SK-N-SH (cell line): ENCODE measurements at regions of chr19 and their contacts with region 1.

Region 1: GRCh38 chr19:15418588-15419412 is at the start of gene AKAP8L:
- DNase-seq: peak; percentile 97
- H3K4me3 ChIP-seq: peak within 1 kb of the TSS; percentile 93 to 94
- H3K27ac ChIP-seq: peak within 1 kb of the TSS; percentile 73 to 89
- H3K4me1 ChIP-seq: peaks cover 10 to 42% of the 10 kb centered on the region in 2 experiments; a peak in 3 of 4 replicates
- H3K27me3 ChIP-seq: no peaks in the 10 kb centered on the region
- CTCF ChIP-seq: peak; percentile 66
- EP300 ChIP-seq: no peak
- RAD21 ChIP-seq: peak; percentile 73
- polyA plus RNA-seq, gene AKAP8L: 44.7 and 46.1 TPM in 2 replicates

Region 2: DNA sequence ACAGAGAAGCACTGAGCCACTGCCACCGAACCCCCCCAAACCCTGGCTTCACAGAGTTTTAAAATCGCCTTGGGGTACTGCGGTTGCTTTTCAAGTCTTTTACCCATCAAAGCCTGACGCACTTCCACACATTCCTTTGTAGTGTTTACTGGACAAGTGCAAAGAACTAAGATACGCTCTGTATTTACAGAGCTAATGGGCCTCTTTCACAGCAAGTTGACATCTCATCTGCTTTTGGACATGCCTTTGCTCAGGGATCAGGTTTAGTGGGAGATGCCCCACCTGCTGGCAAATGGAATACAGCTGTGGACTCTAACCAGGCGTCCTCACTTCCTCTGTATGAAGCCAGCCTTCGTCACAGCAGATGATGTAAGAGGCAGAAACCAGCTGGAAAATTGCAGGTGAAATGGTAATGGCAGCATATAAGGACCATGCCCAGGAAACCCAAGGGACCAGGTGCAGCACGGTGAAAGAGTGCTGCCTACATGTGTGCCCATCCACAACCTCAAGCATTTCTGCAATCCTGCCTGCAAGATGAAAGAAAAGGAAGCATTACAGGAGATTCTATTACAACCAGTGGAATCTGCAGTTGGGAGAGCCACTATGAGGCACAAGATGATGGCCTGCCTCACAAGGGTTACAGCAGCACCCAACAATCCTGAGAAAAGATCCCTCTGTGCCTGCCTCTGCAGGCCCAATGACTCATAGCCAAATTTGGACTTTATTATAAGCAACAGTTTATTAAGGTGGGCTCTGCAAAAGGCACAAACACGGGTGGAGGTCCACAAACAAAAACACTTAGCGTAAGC is 121.2 kb before region 1 on chr19:
- CTCF ChIA-PET with region 1: no interaction called
- POLR2A ChIA-PET with region 1: no interaction called
- DNase-seq: no peak
- H3K4me3 ChIP-seq: no peak overlapping the region
- H3K27ac ChIP-seq: peak overlapping the region; percentile 65 to 84; a peak in 3 of 4 replicates
- H3K4me1 ChIP-seq: peaks cover 48 to 71% of the 10 kb centered on the region in 2 experiments
- H3K27me3 ChIP-seq: no peaks in the 10 kb centered on the region
- CTCF ChIP-seq: peak; percentile 17; the same call in 1 of the 2 replicates
- EP300 ChIP-seq: no peak
- RAD21 ChIP-seq: peak; percentile 41

Region 3: GRCh38 chr19:15379083-15379995 is 39.5 kb before region 1 on chr19 and contains the start of gene AKAP8:
- CTCF ChIA-PET with region 1: interaction called, 9 read pairs
- POLR2A ChIA-PET with region 1: interaction called, 15 read pairs
- DNase-seq: peak; percentile 100
- H3K4me3 ChIP-seq: peak within 1 kb of the TSS; percentile 84 to 91
- H3K27ac ChIP-seq: peak within 1 kb of the TSS; percentile 88 to 93
- H3K4me1 ChIP-seq: peaks cover 9 to 31% of the 10 kb centered on the region in 2 experiments; a peak in 3 of 4 replicates
- H3K27me3 ChIP-seq: no peaks in the 10 kb centered on the region
- CTCF ChIP-seq: no peak
- EP300 ChIP-seq: no peak
- RAD21 ChIP-seq: no peak
- polyA plus RNA-seq, gene AKAP8: 17.2 and 21.0 TPM in 2 replicates

Region 4: DNA sequence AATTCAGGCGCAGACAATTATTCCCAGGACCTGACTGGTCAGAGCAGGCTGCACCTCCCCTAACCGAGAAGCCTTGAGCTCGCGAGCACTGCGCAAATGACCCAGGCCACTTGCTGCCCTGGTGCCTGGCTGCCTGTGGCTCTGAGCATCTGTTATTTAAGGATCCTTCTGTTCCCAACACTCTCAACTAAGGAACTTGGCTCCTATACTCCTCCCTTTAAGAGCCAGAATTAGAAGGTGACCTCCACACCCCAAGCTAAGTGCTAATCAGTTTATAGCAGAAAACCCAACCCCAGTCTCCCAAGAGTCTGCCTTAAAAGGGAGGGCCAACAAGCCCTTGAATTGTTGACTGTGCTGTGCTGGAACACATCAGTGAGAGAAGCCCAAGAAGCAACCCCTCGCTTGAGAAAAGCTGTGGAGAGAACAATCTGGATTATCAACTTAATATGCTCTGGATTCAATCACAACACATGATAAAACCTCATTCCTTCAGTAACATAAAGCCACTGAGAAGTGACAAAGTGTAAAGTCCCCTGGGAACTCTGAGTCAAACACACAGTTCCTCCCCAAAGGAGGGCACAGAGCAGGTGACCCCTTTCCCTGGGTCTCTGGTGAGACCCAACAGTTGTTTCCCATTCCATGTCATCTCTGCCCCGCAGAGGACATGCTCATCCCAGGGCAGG is 14.6 kb before region 1 on chr19:
- CTCF ChIA-PET with region 1: interaction called, 19 read pairs
- POLR2A ChIA-PET with region 1: interaction called, 7 read pairs
- DNase-seq: no peak
- H3K4me3 ChIP-seq: no peak overlapping the region
- H3K27ac ChIP-seq: no peak overlapping the region
- H3K4me1 ChIP-seq: peaks cover 0 to 2% of the 10 kb centered on the region in 2 experiments; a peak in 2 of 4 replicates
- H3K27me3 ChIP-seq: no peaks in the 10 kb centered on the region
- CTCF ChIP-seq: no peak
- EP300 ChIP-seq: no peak
- RAD21 ChIP-seq: no peak

Region 5: DNA sequence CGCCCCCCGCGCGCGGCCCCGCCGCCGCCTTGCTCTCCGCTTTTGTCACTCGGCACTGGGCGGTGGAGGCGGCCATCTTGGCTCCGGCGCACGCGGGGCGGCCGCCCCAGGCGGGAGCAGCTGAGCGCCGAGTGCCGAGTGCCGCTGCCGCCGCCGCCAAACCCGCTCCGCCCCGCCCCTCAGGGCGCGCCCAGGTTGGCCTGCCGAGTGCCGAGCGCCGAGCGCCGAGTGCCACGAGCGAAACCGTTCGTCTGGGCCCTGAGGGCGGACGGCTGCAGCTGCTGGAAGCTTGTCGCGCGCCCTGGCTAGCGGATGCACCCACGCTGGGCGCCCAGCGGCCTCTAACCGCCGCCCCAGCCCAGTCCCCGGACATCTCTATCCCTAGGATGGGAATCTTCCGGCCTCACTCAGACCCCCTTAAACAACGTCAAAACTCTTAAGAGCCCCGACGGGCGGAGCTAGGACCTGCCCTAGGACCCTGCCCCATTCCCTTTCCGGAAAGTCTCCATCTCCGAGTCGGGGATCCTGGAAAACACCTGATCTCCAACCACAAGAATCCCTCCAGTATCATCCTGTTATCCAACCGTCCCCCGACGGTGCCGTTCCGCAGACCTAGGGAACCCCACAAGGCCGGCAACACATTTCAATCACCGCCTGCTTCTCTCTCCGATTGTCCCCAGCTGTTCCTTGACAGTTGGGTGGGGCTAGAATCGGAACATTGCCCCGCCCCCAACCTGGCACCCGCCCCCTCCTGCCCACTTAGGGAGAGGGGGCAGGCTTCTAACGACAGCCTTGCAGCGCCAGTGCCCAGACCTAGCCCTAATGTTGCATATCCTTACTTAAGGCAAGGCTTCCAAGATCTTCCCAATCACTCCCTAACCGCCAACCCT is 14.1 kb after region 1 on chr19:
- CTCF ChIA-PET with region 1: interaction called, 12 read pairs
- POLR2A ChIA-PET with region 1: interaction called, 12 read pairs
- DNase-seq: peak; percentile 99
- H3K4me3 ChIP-seq: peak overlapping the region; percentile 63 to 87
- H3K27ac ChIP-seq: peak overlapping the region; percentile 80 to 88
- H3K4me1 ChIP-seq: peaks cover 5 to 24% of the 10 kb centered on the region in 2 experiments; a peak in 2 of 4 replicates
- H3K27me3 ChIP-seq: no peaks in the 10 kb centered on the region
- CTCF ChIP-seq: no peak
- EP300 ChIP-seq: peak in 1 of 2 experiments; percentile 40; a peak in 1 of 4 replicates
- RAD21 ChIP-seq: no peak

Region 6: DNA sequence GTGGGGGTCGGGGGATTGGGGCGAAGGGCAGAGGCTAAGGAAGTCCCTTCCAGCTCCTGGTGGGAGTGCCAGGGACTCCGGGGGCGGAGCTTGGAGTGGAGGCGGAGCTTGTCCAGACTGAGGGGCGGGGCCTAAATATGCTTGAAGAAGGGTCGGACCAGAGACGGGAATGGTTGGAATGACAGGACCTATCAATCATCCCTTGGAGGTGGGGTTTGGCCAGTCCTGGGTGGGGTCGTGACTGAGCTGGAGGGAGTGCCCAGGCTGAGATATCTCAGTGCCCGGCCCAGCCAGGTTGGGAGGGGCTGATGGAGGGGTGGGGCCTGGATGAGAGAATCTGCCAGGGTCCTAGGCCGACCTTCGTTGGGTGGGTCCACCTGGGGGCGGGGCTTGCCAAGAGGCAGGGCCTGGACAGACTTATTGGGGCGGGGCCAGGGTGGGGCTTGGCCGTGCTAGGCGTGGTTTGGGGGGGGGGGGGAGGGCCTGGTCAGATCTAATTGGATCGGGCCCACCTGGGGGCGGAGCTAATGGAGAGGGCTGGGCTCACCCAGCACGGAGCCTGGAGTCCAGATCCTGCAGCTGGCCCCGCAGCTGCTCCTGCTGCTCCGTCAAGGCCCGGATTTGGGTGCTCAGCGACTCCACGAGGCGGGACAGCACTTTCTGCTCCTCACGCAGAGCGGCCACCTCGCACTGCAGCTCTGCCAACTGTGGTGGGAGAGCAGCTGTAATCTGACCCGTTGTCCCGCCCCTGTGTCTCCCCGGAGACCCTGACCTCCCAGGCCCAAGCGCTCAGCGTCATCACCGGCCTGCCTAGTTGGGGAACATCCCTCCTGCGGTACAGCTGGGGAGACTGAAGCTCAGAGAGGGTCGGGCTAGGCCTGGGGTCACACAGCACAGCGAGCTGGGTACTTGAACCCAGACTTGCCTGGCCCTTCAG is 33.6 kb after region 1 on chr19:
- CTCF ChIA-PET with region 1: interaction called, 8 read pairs
- POLR2A ChIA-PET with region 1: interaction called, 10 read pairs
- DNase-seq: peak; percentile 98
- H3K4me3 ChIP-seq: peak overlapping the region; percentile 45 to 60
- H3K27ac ChIP-seq: peak overlapping the region in 1 of 2 experiments; percentile 39; a peak in 1 of 4 replicates
- H3K4me1 ChIP-seq: peaks cover 0 to 24% of the 10 kb centered on the region in 2 experiments; a peak in 2 of 4 replicates
- H3K27me3 ChIP-seq: 0 out of 2 replicates have a peak, but pooled peaks cover 15% of the 10 kb centered on the region
- CTCF ChIP-seq: no peak
- EP300 ChIP-seq: no peak
- RAD21 ChIP-seq: no peak

Region 7: DNA sequence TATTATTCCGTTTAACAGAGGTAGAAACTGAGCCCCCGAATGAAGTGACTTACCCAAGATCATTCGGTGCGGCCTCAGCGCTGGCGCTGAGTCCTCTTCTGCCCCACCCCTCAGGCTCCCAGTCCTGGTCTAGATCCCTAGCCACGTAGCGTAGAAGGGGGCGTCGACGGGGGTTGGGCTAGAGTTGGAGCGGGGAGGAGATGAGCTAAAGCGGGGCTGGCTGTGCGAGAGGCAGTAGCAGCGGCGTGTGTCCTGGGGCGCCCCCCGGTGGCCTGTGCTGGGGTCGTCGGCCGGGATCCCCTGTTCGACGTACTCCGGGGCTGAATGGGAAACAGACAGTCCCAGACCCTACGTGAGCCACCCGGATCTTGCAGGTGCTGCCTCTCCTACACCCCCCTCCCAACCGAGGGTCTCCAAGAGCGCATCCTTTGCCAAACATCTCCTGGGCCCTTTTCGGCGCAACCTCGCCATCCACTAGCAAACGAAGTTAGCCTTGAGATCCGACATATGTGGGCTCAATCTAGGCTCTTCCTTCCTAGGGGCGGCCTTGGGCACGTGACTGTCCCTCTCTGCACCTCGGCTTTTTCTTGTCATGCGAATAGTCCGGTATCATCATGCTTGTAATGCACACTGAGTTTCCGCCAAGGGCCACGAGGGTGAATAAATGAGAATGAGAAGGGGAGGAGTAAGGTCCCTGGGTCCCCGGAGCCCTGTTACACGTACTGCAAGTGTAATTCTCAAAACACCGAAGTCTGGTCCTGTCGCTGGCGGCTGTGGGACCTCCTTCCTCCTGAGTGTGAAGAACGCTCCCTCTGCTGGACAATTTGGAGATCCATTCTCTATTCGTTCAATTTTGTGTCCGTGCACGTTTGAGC is 137.2 kb after region 1 on chr19:
- CTCF ChIA-PET with region 1: interaction called, 12 read pairs
- POLR2A ChIA-PET with region 1: interaction called, 4 read pairs
- DNase-seq: peak; percentile 93
- H3K4me3 ChIP-seq: peak overlapping the region; percentile 9 to 45; a peak in 3 of 4 replicates
- H3K27ac ChIP-seq: no peak overlapping the region
- H3K4me1 ChIP-seq: peaks cover 0 to 4% of the 10 kb centered on the region in 2 experiments; a peak in 1 of 4 replicates
- H3K27me3 ChIP-seq: peaks cover 22% of the 10 kb centered on the region; the same call in 1 of the 2 replicates
- CTCF ChIP-seq: peak; percentile 72
- EP300 ChIP-seq: no peak
- RAD21 ChIP-seq: peak; percentile 95